Prostate gland (tissue), 2 donors: ENCODE measurements at regions of chr14 and their contacts with region 1.

Region 1: DNA sequence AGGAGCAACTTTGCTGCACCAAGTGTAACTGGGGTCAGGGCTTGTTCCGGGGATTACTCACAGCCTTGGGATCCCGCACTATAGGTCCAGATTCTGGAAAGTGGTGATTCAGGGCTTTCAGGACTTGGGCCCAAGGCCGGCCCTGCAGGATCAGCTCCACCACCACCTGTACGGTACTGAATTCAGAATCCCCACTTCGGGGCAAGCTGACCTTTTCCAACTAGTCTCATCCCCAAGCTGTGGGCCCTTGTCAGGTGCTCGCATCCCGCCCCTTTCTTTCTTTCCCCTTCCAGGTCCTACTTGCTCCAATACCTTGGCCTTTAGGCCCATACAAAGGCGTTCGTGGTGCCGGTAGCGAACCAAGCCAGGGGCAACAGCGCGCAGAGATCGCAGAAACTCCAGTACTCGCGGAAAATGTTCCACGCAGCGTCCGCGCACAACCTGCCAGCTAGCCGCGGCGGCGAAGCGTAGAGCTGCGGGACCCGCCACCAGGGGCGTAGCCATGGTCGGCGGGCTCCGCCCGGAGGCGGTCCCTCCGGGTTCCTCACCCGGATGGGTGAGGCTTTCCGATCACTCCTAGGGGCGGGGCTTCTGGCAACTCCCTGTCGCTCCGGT is 487 bp downstream of the TINF2 start:
- DNase-seq: peak; percentile 93
- H3K4me3 ChIP-seq: peak overlapping the region; percentile 57 to 77
- H3K27ac ChIP-seq: peak overlapping the region; percentile 99
- H3K4me1 ChIP-seq: peaks cover 19% of the 10 kb centered on the region
- H3K27me3 ChIP-seq: no peaks in the 10 kb centered on the region
- CTCF ChIP-seq: peak; percentile 70 to 92 (median 84)
- POLR2A ChIP-seq: peak; percentile 49

Region 2: DNA sequence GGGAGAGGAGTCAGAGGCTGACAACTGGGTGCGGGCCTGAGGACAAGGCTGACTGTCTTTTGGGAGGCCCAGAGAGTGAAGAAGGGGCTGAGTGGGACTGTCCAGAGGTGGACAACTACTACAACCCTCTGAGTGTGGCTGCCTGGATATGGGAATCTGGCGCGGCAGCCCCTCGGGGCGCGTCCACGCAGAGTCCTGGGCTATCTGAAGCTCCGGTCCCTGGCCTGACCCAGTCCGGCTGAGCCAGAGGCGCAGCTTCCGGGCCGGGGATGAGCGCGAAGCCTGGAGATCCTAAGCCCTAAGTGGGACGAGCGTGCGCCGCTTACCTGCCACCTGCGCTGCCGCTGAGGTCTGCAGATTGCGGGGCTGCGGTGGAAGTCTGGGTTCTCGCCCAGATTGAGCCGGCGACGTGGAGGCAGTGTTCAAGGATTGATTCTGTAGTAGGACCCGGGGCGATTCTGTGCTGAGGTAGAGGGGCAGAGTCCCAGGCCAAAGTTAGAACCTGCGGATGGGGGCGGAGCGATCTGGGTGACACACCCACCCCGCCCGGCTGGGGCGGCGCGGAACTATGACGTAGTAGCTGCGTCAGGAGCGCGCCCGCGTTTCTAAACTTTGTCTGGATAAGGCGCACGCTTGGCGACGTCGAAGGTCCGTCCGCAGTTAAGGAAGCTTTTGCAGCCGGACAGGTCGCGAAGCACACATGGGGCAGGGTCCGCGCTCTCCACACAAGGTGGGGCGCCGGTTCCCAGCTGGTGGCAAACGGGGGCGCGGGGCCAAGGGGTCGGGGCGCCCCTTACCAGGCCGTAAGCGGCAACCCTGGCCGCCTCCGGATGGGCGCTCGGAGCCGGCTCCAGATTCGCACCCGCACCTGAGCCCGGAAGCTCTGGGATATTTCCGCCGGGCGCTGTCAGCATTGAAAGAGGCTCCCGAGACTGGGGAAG is 57.6 kb after region 1 on chr14 and contains the starts of genes DHRS1 and NOP9:
- intact Hi-C with region 1: loop called (anchors 2 kb)
- DNase-seq: peak; percentile 92
- H3K4me3 ChIP-seq: peak within 1 kb of the TSS; percentile 66 to 69
- H3K27ac ChIP-seq: peak within 1 kb of the TSS; percentile 76 to 82
- H3K4me1 ChIP-seq: peaks cover 14% of the 10 kb centered on the region
- H3K27me3 ChIP-seq: no peaks in the 10 kb centered on the region
- CTCF ChIP-seq: peak in 1 of 4 experiments; percentile 30
- POLR2A ChIP-seq: peak; percentile 86
- total RNA-seq, gene DHRS1: 16.9 to 74.0 TPM
- total RNA-seq, gene NOP9: 21.2 to 22.9 TPM

Region 3: DNA sequence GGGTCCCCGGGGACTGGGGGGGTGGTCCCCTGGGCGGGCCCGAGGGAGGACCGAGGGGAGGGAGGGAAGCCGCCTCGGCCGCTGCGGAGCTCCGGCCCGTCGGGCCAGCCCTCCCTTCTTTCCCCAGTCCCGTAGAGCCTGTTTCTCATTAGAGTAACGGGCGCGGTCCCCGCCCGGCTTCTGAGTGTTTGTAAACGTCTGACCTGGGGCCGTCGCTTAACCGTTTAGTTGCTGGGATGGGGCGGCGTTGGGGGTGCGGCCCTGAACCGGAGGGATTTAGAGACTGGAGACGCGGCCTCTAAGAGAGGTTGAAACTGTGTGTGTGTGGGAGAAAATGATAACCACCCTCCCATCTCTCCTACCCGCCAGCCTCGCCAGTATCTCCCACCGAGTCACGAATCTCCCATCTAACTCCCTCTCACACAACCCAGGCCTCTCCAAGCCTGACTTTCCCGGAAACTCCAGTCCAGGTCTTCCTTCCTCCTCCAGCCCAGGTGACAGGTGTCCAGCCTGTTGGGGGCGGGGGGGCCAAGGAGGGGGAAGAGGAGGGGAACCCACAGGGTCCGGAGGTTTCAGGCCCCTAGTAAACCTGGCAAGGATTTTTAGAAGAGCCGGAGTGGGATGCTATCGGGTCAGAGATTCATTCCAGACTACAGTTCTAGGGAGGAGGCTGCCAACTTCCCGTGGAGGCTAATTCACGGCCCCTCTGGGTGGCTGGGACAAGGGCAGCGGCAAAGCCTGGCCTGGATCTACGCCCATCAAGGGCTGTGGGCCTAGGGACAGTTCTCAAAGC is 125.0 kb after region 1 on chr14:
- intact Hi-C with region 1: no loop called
- DNase-seq: peak; percentile 91
- H3K4me3 ChIP-seq: peak overlapping the region; percentile 46 to 48
- H3K27ac ChIP-seq: peak overlapping the region; percentile 85 to 92
- H3K4me1 ChIP-seq: no peaks in the 10 kb centered on the region
- H3K27me3 ChIP-seq: no peaks in the 10 kb centered on the region
- CTCF ChIP-seq: no peak
- POLR2A ChIP-seq: peak; percentile 22

Region 4: DNA sequence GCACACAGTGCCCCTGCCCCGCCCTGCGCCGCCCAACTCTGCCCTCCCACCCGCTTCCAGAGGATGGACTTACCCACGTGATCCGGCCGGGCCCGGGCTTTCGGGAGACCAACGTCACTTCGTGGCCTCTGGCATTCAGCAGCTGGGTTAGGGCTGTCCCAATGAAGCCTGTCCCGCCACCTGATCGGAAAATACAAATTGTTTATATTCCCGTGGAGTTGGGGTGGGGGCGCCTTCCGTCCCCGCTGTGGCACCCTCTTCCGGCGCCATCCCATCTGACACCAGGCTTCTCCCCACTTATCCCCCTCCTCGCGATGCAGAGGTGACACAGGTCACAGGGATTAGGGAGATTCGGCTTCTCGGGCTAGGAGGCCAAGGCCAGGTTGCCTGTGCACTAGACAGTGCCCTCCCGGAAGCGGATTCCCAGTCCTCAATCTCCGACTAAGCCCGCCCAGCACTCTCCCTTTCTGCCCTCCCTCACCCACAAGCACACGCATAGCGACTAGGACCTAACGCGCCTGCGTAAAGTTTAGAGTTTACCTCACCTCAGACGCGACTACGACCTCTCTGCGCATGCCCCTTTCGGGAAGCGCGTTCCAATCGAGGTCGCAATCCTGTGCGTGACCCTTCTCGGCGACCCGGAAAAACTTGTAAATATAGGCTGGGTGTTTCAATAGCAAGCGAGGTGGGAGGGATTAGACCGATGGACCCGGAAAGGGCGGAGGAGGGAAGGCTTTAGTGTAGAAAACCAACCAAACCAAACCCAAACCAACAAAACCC is 200.5 kb after region 1 on chr14 and contains the start of gene SDR39U1:
- intact Hi-C with region 1: loop called (anchors 5 kb)
- DNase-seq: peak; percentile 95
- H3K4me3 ChIP-seq: peak within 1 kb of the TSS; percentile 67 to 79
- H3K27ac ChIP-seq: peak within 1 kb of the TSS; percentile 98 to 99
- H3K4me1 ChIP-seq: peaks cover 6% of the 10 kb centered on the region
- H3K27me3 ChIP-seq: no peaks in the 10 kb centered on the region
- CTCF ChIP-seq: peak in 1 of 4 experiments; percentile 0
- POLR2A ChIP-seq: peak; percentile 89
- total RNA-seq, gene SDR39U1: 49.5 to 64.4 TPM